Activated naive CD4-positive, alpha-beta T cell treated with anti-CD3 and anti-CD28 coated beads for 36 hours (primary cell): ENCODE measurements at regions of chr1 and their contacts with region 1.

Region 1: DNA sequence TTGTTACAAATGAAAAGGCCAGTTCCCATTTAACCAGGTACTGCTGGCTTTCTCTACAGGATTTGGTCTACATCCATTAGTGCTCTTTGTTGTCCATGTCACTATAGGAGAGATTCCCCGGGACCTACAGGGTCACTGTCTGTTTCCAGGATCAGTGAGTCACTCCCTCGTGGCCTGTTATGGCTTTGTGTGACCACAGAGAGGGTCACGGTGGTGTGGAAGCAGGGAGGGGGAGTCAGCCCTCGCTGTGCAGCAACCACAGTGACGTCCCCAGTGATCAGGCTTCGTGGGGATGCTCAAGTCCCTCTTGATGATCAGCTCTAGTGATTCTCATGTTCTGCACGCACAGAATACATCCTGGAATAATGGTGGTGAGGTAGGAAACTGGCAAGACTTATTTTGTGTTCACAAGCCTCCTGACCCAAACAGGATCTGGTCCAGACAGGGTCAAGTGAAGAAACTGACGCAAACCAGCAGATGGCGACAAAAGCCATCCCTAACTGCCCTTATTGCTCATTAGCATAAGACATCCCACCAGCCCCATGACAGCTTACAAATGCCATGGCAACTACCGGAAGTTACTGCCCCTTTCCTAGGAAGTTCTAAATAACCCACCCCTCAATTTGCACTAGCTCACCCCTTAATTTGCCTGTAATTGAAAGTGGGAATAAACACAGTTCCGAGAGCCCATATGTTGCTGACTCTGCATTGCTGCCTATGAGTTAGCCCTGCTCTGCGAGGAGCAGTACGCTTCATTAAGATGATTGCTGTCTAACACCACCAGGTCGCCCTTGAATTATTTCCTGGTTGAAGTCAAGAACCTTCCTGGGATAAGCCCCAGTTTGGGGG is 98.5 kb downstream of the DISC1 start:
- DNase-seq: peak; percentile 43
- H3K4me3 Mint-ChIP-seq: no peak overlapping the region
- H3K27ac Mint-ChIP-seq: no peak overlapping the region
- H3K4me1 Mint-ChIP-seq: no peaks in the 10 kb centered on the region
- H3K27me3 Mint-ChIP-seq: no peaks in the 10 kb centered on the region

Region 2: GRCh38 chr1:231806623-231807495 is 81.8 kb after region 1 on chr1:
- CTCF ChIA-PET with region 1: interaction called, 3 read pairs
- intact Hi-C with region 1: loop called (anchors 1 kb)
- DNase-seq: peak; percentile 58
- H3K4me3 Mint-ChIP-seq: no peak overlapping the region
- H3K27ac Mint-ChIP-seq: no peak overlapping the region
- H3K4me1 Mint-ChIP-seq: no peaks in the 10 kb centered on the region
- H3K27me3 Mint-ChIP-seq: no peaks in the 10 kb centered on the region